PC-9 (cell line): ENCODE measurements at regions of chr19 and their contacts with region 1.

Region 1: DNA sequence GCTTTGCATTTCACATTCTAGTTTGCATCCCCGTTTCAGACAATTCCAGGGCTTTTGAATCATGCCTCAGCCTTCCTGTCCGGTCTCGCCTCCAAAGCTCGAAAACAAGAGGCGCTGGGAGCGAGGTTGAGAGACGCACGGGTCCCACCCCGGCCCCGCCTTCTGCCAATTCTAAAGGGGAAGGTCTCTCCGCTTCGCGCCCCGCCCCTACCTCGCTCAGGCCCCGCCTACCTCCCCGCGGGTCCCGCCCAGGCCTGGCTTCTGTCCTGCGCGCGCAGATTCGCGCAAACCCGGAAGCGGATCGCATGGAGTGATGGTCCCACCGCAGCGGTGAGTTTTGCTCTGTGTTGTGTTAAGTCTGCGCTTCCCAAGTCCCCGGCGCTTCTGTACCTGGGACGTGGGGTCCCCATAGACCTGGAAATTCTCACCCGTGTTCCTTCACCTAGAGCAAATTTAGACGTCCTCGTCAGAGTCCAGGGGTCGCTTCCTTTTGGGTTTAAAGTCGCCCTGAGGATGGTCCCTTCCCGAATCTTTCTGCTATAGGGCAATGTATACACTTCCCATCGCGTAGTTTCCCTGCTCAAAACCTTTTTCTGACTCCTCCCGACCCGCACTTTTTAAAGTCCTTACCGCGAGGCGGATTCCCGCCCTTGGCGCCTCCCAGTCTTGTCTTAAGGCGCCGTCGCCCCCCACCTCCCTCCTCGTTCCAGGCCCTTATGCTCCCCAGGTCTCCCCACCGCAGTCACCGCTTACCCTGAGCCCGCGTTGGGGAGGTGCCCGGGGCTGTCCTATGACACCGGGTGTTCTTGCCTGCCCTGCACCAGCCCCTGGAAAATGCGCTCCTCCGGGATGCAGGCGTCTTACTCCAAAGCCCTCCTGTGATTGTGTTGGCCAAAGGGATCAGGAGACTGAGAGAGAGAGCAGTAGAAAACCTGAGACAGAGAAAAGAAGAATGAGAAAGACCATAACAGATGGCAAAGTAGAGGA is at the start of gene ZNF845:
- DNase-seq: peak; percentile 77 to 99
- H3K4me3 ChIP-seq: peak within 1 kb of the TSS; percentile 74
- H3K27ac ChIP-seq: 0 out of 2 replicates have a peak within 1 kb of the TSS, but pooled peaks have one; percentile 6
- H3K4me1 ChIP-seq: peaks cover 12% of the 10 kb centered on the region
- H3K27me3 ChIP-seq: no peaks in the 10 kb centered on the region
- CTCF ChIP-seq: no peak
- total RNA-seq, gene ZNF845: 8.2 and 8.6 TPM in 2 replicates

Region 2: GRCh38 chr19:53158119-53158656 is 175.6 kb before region 1 on chr19:
- CTCF ChIA-PET with region 1: no interaction called
- POLR2A ChIA-PET with region 1: no interaction called
- intact Hi-C with region 1: loop called (anchors 1 kb)
- DNase-seq: peak in 1 of 2 experiments; percentile 51
- H3K4me3 ChIP-seq: peak overlapping the region; percentile 93
- H3K27ac ChIP-seq: no peak overlapping the region
- H3K4me1 ChIP-seq: peaks cover 3% of the 10 kb centered on the region; the same call in 1 of the 2 replicates
- H3K27me3 ChIP-seq: no peaks in the 10 kb centered on the region
- CTCF ChIP-seq: no peak